ENCODE measurements at regions of chr1 and their contacts with region 1.

Region 1: GRCh38 chr1:147225193-147225730 is at the start of gene FMO5:
- DNase-seq: no peak
- H3K4me3 ChIP-seq: peak within 1 kb of the TSS; percentile 58
- H3K27me3 ChIP-seq: no peaks in the 10 kb centered on the region
- CTCF ChIP-seq: peak; percentile 31; the same call in 1 of the 2 replicates
- polyA plus RNA-seq, gene FMO5: 0.39 and 0.60 TPM in 2 replicates

Region 2: DNA sequence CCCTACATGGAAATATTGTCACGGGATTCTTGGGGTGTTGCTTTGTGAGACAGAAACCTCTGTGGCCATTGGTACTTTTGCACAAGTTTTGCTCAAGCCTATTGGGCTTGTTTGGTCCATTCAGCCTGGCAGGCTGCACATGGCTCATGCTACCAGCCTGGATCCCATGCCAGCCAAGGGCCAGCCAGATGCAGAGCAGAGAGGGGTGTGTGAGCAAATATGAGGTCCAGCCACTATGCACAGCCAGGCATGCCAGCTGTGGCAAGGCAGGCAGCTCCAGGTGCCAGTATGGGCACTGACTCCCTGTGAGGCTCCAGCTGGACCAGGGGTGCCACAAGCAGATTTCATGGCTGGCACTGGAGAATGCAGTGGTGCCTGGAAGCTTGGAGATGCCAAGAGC is 10.6 kb after region 1 on chr1:
- CTCF ChIA-PET with region 1: interaction called, 7 read pairs
- POLR2A ChIA-PET with region 1: interaction called, 10 read pairs
- DNase-seq: no peak
- H3K4me3 ChIP-seq: no peak overlapping the region
- H3K27me3 ChIP-seq: no peaks in the 10 kb centered on the region
- CTCF ChIP-seq: no peak